Right ventricle myocardium inferior (tissue), 1 donor: ENCODE measurements at regions of chr4 and their contacts with region 1.

Region 1: GRCh38 chr4:2255501-2256155 is 6.3 kb downstream of the MXD4 start:
- DNase-seq: peak; percentile 59
- ATAC-seq: peak; percentile 27

Region 2: DNA sequence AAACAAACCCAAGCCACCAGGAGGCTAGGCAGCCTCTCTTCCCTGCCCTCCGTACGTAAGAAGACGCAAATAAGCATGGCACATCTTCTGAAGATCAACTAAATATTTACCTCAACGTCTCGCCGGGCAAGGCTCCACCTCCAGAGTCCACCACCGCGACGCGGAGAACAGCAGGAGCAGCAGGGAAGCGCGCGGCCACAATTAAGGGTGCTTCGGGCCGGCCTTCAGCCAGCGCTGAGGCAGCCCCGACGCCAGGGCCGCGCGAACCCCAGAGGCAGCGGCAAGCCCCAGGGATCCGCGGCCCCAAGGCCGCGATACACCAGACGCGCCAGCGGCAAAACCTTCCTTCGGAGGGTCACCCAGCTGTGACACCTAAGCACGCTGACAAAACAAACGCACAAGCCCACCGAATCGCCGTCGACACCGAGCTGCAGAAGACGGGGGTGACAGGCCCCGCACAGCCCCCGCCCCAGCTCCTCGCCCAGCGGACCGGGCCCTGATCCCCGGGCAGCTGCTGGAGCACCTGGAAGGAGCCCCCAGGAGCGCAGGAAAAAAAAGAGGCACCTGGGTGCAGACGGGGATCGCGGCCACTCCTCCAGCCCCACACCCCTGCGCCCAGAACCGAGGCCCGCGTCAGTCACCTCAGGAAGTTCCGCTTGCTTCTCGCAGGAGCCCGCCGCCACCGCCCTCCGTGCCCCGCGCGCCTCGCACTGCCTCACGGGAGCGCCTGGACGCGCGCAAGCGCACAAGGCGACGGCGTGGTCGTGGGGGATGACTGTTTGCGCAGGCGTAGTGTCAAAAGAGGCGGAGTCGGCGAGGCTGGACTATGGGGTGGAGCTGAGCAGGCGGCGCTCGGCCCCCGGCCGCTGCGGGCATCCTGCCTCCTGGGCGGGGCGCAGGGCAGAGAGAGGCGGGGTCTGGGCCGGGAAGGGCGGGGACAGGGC is 13.9 kb before region 1 on chr4 and contains the starts of genes HAUS3 and POLN:
- intact Hi-C with region 1: loop called (anchors 2 kb)
- DNase-seq: peak; percentile 99
- ATAC-seq: peak; percentile 98
- total RNA-seq, gene HAUS3: 7.7 TPM
- total RNA-seq, gene POLN: 2.0 TPM

Region 3: GRCh38 chr4:2292646-2293108 is 37.0 kb after region 1 on chr4:
- intact Hi-C with region 1: no loop called
- DNase-seq: no peak
- ATAC-seq: no peak